Right cardiac atrium (tissue), 5 donors: ENCODE measurements at regions of chr3 and their contacts with region 1.

Region 1: DNA sequence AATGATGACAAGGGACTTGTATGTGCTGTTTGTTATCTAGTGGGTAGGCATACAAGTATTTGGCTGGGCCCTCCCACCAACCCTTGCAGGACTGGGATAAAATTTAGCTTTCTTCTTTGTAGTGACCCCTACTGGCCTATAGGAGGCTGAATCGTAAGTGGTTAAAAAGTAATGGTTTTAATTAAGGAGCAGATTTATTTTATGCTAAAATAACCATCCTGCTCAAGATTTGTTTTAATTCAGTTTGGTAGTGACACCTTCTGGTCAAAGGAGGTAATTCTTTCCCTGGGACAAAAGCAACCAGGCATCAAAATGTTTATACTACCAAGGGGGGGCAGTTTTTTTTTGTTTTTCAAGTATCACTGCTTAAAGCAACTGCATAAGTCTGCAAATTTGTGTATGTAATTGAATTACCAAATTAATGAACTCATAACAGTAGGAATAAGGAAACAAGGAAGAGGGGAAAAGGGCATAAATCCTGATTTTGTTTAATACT is 70.7 kb downstream of the TOP2B start:
- DNase-seq: peak in 2 of 3 donors; percentile 35 to 70
- ATAC-seq: peak; percentile 72 to 82
- H3K4me3 ChIP-seq: no peak overlapping the region
- H3K27ac ChIP-seq: no peak overlapping the region
- H3K4me1 ChIP-seq: peaks cover 16% of the 10 kb centered on the region
- H3K27me3 ChIP-seq: no peaks in the 10 kb centered on the region

Region 2: DNA sequence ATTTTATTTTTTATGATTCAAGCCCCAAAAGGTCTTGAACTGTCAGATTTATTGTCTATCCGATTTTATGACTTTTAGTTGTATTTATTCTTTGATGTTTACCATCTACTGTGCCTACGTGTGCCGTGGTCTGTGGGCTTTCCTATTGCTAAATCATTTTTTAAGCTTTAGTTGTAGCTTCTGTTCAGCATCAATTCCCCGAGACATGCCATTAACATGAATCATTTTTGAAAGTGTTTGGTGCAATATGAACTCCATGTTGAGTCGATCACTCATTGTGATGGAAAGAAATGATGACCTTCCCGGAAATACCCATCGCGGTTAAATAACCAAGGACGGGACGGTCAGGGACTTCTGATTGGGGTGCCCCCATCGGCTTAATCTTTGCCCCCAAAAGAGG is 830.6 kb before region 1 on chr3:
- intact Hi-C with region 1: loop called in 1 of 4 experiments (anchors 10 kb)
- DNase-seq: no peak
- ATAC-seq: no peak
- H3K4me3 ChIP-seq: no peak overlapping the region
- H3K27ac ChIP-seq: no peak overlapping the region
- H3K4me1 ChIP-seq: no peaks in the 10 kb centered on the region
- H3K27me3 ChIP-seq: peaks cover 3% of the 10 kb centered on the region

Region 3: GRCh38 chr3:24963762-24964625 is 630.1 kb before region 1 on chr3:
- intact Hi-C with region 1: loop called in 2 of 4 experiments (anchors 5 kb)
- DNase-seq: no peak
- ATAC-seq: no peak
- H3K4me3 ChIP-seq: no peak overlapping the region
- H3K27ac ChIP-seq: no peak overlapping the region
- H3K4me1 ChIP-seq: no peaks in the 10 kb centered on the region
- H3K27me3 ChIP-seq: no peaks in the 10 kb centered on the region

Region 4: GRCh38 chr3:25033407-25034029 is 560.5 kb before region 1 on chr3:
- intact Hi-C with region 1: loop called (anchors 5 to 10 kb)
- DNase-seq: peak; percentile 46 to 71 (median 69)
- ATAC-seq: peak; percentile 70 to 78
- H3K4me3 ChIP-seq: no peak overlapping the region
- H3K27ac ChIP-seq: no peak overlapping the region
- H3K4me1 ChIP-seq: no peaks in the 10 kb centered on the region
- H3K27me3 ChIP-seq: no peaks in the 10 kb centered on the region

Region 5: DNA sequence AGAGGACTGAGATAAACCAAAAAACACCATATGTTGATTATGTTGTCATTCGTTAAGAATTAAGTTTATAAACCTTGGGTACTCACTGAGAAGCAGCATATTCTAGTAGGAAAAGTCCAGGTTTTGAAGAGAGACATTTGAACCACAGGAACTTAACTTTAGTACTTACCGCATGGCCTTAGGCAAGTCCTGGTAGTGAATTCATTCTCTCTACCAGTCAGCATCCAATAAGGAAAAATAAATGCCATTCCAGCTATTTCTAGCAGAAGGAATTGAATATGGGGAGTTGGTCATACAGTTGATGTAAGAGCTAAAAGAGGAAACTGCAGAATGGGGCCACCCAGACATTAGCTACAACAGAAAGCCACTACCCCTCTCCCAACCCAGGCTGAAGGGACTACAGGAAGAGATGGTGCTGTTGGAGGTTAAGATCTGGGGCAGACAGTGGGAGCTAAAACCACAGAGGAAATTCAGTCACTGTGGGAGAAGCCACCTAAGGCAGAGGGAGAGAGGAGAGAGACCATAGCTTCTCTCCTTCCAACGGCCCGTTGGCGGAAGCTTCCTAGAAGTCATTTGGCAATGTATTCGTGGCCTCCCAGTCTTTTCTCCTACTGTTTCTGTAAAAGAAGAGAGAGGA is 299.8 kb before region 1 on chr3:
- intact Hi-C with region 1: no loop called
- DNase-seq: no peak
- ATAC-seq: no peak
- H3K4me3 ChIP-seq: no peak overlapping the region
- H3K27ac ChIP-seq: no peak overlapping the region
- H3K4me1 ChIP-seq: no peaks in the 10 kb centered on the region
- H3K27me3 ChIP-seq: no peaks in the 10 kb centered on the region

Region 6: DNA sequence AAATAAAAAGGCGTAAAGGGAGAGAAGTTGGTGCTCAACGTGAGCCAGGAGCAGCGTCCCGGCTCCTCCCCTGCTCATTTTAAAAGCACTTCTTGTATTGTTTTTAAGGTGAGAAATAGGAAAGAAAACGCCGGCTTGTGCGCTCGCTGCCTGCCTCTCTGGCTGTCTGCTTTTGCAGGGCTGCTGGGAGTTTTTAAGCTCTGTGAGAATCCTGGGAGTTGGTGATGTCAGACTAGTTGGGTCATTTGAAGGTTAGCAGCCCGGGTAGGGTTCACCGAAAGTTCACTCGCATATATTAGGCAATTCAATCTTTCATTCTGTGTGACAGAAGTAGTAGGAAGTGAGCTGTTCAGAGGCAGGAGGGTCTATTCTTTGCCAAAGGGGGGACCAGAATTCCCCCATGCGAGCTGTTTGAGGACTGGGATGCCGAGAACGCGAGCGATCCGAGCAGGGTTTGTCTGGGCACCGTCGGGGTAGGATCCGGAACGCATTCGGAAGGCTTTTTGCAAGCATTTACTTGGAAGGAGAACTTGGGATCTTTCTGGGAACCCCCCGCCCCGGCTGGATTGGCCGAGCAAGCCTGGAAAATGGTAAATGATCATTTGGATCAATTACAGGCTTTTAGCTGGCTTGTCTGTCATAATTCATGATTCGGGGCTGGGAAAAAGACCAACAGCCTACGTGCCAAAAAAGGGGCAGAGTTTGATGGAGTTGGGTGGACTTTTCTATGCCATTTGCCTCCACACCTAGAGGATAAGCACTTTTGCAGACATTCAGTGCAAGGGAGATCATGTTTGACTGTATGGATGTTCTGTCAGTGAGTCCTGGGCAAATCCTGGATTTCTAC is 165.9 kb before region 1 on chr3 and contains the start of gene RARB:
- intact Hi-C with region 1: loop called (anchors 5 to 10 kb)
- DNase-seq: peak; percentile 71 to 87 (median 86)
- ATAC-seq: peak; percentile 93 to 94
- H3K4me3 ChIP-seq: peak within 1 kb of the TSS; percentile 91
- H3K27ac ChIP-seq: peak within 1 kb of the TSS; percentile 100
- H3K4me1 ChIP-seq: no peaks in the 10 kb centered on the region
- H3K27me3 ChIP-seq: no peaks in the 10 kb centered on the region
- total RNA-seq, gene RARB: 17.0 to 26.4 (median 24.7) TPM

Region 7: GRCh38 chr3:25532431-25533162 is 61.5 kb before region 1 on chr3:
- intact Hi-C with region 1: loop called in 1 of 4 experiments (anchors 10 kb)
- DNase-seq: no peak
- ATAC-seq: no peak
- H3K4me3 ChIP-seq: no peak overlapping the region
- H3K27ac ChIP-seq: no peak overlapping the region
- H3K4me1 ChIP-seq: peaks cover 10% of the 10 kb centered on the region
- H3K27me3 ChIP-seq: no peaks in the 10 kb centered on the region

Region 8: DNA sequence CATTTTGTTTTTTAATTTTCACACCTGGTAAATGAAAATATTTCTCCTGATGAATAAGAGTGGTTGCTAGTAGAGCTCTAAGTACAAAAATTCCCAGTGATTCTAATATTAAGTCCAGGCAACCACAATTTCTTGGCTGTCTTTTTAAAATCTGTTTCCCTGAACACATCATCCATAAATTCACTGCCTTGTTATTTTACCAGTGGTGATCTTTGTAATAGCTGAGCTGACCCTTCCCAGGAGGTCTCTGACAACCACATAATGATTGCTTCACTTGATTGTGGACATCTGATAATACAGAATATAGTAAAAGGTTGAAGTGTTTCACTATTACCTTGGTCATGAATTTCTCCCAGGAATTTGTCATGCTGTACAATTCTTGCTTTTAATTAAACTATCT is 84.5 kb after region 1 on chr3:
- intact Hi-C with region 1: no loop called
- DNase-seq: no peak
- ATAC-seq: no peak
- H3K4me3 ChIP-seq: no peak overlapping the region
- H3K27ac ChIP-seq: no peak overlapping the region
- H3K4me1 ChIP-seq: no peaks in the 10 kb centered on the region
- H3K27me3 ChIP-seq: no peaks in the 10 kb centered on the region